ENCODE measurements at regions of chr13 and their contacts with region 1.

Region 1: DNA sequence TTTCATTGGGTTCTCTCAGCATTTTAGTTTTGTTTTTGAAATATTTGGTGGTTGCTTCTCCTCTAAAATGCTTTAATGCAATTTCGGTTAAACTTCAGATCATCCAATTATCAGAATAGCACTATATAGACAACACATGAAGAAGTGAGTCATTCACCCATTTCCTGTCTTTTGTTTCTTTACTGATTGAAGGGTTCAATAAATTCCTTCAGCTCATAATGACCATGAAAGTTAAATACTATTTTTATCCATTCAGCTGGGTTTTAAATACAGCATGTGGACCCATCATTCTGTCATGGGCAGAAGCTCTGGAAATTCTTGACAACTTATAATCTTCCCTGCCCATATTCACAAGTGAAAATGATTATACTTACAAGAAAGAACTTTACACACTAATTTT is 187.2 kb downstream of the ITGBL1 start:
- DNase-seq: no peak
- ATAC-seq: no peak
- H3K4me3 ChIP-seq: no peak overlapping the region
- H3K27ac ChIP-seq: no peak overlapping the region
- H3K4me1 ChIP-seq: peaks cover 0 to 6% of the 10 kb centered on the region in 2 donors
- H3K27me3 ChIP-seq: no peaks in the 10 kb centered on the region

Region 2: DNA sequence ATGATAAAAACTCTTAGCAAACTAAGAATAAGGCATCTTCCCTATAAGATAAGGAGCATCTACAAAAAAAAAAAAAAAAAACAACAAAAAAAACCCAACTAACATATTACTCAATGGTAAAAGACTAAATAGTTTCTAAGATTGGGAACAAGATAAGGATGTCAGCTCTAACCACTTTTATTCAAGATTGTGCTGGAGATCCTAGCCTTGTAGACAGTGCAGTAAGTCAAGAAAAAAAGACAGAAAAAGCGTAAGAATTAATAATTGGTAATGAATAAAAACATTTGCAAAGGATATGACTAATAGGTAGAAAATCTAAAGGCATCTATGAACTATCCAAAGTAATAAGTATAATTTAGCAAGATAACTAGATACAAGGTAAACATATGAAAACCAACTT is 1625.1 kb before region 1 on chr13:
- intact Hi-C with region 1: no loop called
- DNase-seq: no peak
- ATAC-seq: no peak
- H3K4me3 ChIP-seq: no peak overlapping the region
- H3K27ac ChIP-seq: no peak overlapping the region
- H3K4me1 ChIP-seq: no peaks in the 10 kb centered on the region
- H3K27me3 ChIP-seq: peaks cover 0 to 2% of the 10 kb centered on the region in 2 donors

Region 3: GRCh38 chr13:101530293-101530692 is 109.4 kb before region 1 on chr13:
- intact Hi-C with region 1: loop called in 1 of 2 experiments (anchors 10 kb)
- DNase-seq: no peak
- ATAC-seq: peak; percentile 52
- H3K4me3 ChIP-seq: no peak overlapping the region
- H3K27ac ChIP-seq: no peak overlapping the region
- H3K4me1 ChIP-seq: peaks cover 1 to 5% of the 10 kb centered on the region in 2 donors
- H3K27me3 ChIP-seq: no peaks in the 10 kb centered on the region

Region 4: GRCh38 chr13:101545521-101545920 is 94.2 kb before region 1 on chr13:
- intact Hi-C with region 1: no loop called
- DNase-seq: no peak
- ATAC-seq: no peak
- H3K4me3 ChIP-seq: no peak overlapping the region
- H3K27ac ChIP-seq: no peak overlapping the region
- H3K4me1 ChIP-seq: peaks cover 0 to 5% of the 10 kb centered on the region in 2 donors
- H3K27me3 ChIP-seq: no peaks in the 10 kb centered on the region

Region 5: GRCh38 chr13:102460801-102461200 is 821.1 kb after region 1 on chr13:
- intact Hi-C with region 1: no loop called
- DNase-seq: no peak
- ATAC-seq: no peak
- H3K4me3 ChIP-seq: no peak overlapping the region
- H3K27ac ChIP-seq: no peak overlapping the region
- H3K4me1 ChIP-seq: no peaks in the 10 kb centered on the region
- H3K27me3 ChIP-seq: no peaks in the 10 kb centered on the region